ENCODE measurements at regions of chr6 and their contacts with region 1.

Region 1: DNA sequence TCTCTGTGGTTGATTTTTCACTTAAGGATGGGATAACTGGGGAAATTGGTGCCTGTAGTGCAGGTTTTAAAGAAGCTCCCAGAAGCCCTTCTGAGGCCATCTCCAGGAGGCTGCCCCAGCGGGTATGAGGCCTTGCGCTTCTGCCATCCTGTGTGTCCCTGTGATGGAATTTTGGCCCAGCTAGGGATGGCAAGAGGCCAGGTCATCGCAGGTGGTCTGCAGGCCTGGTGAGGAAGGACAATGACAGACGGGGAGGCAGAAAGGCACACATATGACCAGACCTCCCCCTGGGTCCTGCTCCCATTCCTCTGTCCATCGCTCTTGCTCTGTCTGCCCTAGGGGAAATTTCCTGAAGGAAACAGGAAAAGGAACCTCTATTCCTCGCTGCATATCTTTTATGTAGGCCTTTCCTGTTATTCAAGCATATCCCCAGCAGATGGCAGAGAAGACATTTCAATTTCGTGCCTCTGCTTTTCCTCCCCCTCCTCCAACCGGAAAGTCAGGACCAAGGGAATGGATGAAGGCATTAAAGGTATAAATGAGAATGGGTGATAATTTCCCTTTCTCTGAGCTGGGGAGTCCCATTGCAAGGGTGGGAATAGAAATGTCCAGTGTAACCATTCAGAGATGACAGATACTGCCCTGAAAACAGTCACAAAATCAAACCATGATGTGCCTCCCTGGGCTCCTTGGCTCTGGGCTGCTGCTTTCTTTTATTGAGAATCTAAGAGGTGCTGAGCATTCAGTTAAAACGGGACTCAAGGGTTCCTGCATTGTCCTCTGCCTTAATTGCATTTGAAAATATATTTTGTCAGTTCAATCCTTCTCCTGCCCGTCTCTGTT is 17.6 kb upstream of the HLA-F start:
- DNase-seq: no peak
- ATAC-seq: peak; percentile 50 to 73
- H3K4me3 ChIP-seq: no peak overlapping the region
- H3K27ac ChIP-seq: no peak overlapping the region
- H3K4me1 ChIP-seq: no peaks in the 10 kb centered on the region
- H3K27me3 ChIP-seq: peaks cover 4% of the 10 kb centered on the region
- CTCF ChIP-seq: peak; percentile 60

Region 2: GRCh38 chr6:29752451-29753308 is 47.1 kb after region 1 on chr6:
- intact Hi-C with region 1: loop called (anchors 10 kb)
- DNase-seq: peak; percentile 94
- ATAC-seq: peak; percentile 91 to 93
- H3K4me3 ChIP-seq: peak overlapping the region; percentile 65
- H3K27ac ChIP-seq: peak overlapping the region; percentile 95
- H3K4me1 ChIP-seq: peaks cover 28% of the 10 kb centered on the region
- H3K27me3 ChIP-seq: no peaks in the 10 kb centered on the region
- CTCF ChIP-seq: peak; percentile 88